ENCODE measurements at regions of chr15 and their contacts with region 1.

Region 1: DNA sequence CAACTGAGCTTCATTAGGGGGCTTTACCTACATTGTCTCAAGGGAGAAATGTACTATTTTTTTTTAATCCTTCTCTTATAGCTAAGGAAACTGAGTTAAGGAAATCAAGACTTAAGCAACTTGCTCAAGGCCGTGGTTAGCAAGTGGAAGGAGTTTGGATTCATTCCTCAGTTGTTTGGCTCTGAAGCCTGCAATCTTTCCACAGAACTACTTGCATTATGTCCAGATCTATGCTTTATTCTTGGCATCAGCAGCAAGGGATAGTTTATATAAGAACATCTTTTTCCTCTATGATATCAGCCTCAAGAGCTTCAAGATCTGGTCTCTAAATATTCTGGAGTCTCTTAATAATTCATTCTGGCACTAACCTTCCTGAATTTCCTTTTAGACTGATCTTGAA is 182.4 kb downstream of the SV2B start:
- DNase-seq: no peak
- H3K4me3 ChIP-seq: no peak overlapping the region
- H3K27ac ChIP-seq: no peak overlapping the region
- H3K4me1 ChIP-seq: no peaks in the 10 kb centered on the region
- H3K27me3 ChIP-seq: no peaks in the 10 kb centered on the region
- CTCF ChIP-seq: no peak
- POLR2A ChIP-seq: no peak

Region 2: GRCh38 chr15:91271565-91272153 is 10.8 kb before region 1 on chr15:
- intact Hi-C with region 1: loop called (anchors 1 kb)
- DNase-seq: peak; percentile 55
- H3K4me3 ChIP-seq: no peak overlapping the region
- H3K27ac ChIP-seq: no peak overlapping the region
- H3K4me1 ChIP-seq: no peaks in the 10 kb centered on the region
- H3K27me3 ChIP-seq: no peaks in the 10 kb centered on the region
- CTCF ChIP-seq: peak; percentile 76 to 83 (median 80)
- POLR2A ChIP-seq: no peak

Region 3: GRCh38 chr15:91435113-91435512 is 152.6 kb after region 1 on chr15:
- intact Hi-C with region 1: no loop called
- DNase-seq: no peak
- H3K4me3 ChIP-seq: no peak overlapping the region
- H3K27ac ChIP-seq: no peak overlapping the region
- H3K4me1 ChIP-seq: no peaks in the 10 kb centered on the region
- H3K27me3 ChIP-seq: no peaks in the 10 kb centered on the region
- CTCF ChIP-seq: no peak
- POLR2A ChIP-seq: no peak

Measured in uterus (tissue), 4 donors.